Vagina (tissue), 2 donors: ENCODE measurements at regions of chr6 and their contacts with region 1.

Region 1: DNA sequence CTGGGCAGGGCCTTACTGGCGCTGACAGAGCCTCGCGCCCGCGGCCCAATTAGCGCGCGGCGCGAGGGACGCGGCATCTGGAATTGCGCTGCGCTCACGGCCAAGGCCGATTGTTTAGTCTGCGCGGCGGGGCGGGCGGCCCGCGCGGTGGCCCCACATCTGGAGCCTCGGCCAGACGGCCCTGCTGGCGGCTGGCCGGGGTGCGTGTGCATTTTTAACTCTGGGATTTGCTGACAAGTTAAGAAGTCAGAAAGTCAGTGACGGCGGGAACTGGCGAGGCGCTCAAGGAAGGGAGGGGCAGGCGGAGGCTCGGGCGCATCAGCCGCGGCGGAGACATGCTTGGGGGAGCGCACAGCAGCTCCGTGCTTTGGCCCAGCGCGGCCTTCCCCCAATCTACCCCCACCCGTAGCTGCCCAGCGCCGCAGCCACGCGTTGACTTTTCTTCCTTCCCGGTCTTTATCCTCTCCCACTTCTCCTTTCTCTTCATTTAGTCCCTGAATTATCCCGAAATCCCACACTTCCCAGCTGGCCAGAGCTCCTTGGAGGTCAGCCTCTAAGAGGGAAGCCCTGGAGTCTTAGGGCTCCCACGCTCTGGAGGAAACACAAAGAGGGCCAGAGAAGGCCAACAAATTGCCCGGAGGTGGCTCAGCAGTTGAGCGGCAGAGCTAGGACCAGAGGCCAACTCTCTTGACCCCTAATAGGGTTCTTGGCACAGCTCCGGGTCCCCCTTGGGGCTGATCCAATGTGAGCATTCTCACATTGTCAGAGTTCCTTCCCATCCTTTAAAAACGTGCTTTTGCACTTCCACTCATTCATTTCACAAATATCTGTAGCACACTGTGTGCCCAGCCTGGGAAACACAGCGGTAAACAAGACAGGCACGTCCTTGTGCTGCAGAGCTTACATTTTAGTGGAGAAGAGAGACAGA is 40.8 kb upstream of the FOXP4 start:
- DNase-seq: no peak
- H3K4me3 ChIP-seq: peak overlapping the region; percentile 36 to 45
- H3K27ac ChIP-seq: peak overlapping the region; percentile 62
- H3K4me1 ChIP-seq: peaks cover 30% of the 10 kb centered on the region
- H3K27me3 ChIP-seq: no peaks in the 10 kb centered on the region
- CTCF ChIP-seq: no peak
- POLR2A ChIP-seq: no peak

Region 2: DNA sequence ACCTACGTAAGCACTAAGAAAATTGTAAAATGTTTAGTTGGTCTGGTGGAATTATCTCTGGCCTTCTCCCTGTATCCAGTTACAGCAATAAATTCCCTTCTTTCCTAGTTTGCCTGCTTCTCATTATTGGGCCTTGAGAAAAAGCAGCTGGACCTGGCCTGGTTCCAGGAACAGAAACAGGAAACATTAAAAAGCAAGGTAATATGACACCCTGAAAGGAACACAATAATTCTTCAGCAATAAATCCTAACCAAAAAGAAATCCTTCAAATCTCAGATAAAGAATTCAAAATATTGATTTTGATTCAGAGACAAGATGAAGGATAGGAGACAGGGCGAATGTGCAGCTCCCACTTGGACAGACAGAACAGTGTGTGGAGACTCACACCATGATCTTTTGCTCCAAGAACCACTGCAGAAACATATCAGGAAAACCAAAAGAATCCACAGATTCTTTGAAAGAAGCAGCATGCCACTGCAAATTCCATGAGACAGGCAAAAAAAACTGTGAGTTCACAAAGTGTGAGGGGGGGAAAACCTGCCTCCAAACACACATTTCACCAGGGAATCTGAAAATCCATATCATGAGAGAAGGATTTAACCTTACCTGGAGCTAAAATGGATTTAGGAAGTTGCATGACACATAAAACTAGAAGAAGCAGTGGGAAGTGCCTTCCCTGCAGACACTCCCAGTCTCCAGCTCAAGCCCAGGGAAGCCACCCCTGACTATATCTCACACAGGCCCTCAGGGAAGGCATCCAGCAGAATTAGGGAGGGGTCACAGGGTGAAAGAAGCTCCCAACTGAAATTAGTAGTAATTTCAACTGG is 247.8 kb before region 1 on chr6:
- intact Hi-C with region 1: no loop called
- DNase-seq: no peak
- H3K4me3 ChIP-seq: no peak overlapping the region
- H3K27ac ChIP-seq: no peak overlapping the region
- H3K4me1 ChIP-seq: no peaks in the 10 kb centered on the region
- H3K27me3 ChIP-seq: no peaks in the 10 kb centered on the region
- CTCF ChIP-seq: no peak
- POLR2A ChIP-seq: no peak

Region 3: DNA sequence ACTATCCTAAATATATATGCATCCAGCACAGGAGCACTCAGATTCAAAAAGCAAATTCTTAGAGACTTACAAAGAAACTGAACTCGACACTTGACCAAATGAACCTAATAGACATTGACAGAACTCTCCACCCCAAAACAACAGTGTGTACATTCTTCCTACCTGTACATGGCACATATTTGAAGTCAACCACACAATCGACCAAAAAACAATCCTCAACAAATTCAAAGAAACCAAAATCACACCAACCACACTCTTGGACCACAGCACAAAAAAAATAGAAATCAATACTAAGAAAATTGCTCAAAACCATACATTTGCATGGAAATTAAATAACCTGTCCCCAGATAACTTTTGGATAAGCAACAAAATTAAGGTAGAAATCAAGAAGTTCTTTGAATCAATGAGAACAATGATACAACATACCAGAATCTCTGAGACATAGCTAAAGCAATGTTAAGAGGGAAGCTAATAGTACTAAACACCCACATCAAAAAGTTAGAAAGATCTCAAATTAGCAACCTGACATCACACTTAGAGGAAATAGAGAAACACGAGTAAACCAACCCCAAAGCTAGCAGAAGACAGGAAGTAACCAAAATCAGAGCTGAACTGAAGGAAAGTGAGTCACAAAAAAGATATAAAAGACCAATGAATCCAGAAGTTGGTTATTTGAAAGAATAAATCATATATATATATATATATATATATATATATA is 206.4 kb before region 1 on chr6:
- intact Hi-C with region 1: no loop called
- DNase-seq: no peak
- H3K4me3 ChIP-seq: no peak overlapping the region
- H3K27ac ChIP-seq: no peak overlapping the region
- H3K4me1 ChIP-seq: no peaks in the 10 kb centered on the region
- H3K27me3 ChIP-seq: no peaks in the 10 kb centered on the region
- CTCF ChIP-seq: no peak
- POLR2A ChIP-seq: no peak

Region 4: DNA sequence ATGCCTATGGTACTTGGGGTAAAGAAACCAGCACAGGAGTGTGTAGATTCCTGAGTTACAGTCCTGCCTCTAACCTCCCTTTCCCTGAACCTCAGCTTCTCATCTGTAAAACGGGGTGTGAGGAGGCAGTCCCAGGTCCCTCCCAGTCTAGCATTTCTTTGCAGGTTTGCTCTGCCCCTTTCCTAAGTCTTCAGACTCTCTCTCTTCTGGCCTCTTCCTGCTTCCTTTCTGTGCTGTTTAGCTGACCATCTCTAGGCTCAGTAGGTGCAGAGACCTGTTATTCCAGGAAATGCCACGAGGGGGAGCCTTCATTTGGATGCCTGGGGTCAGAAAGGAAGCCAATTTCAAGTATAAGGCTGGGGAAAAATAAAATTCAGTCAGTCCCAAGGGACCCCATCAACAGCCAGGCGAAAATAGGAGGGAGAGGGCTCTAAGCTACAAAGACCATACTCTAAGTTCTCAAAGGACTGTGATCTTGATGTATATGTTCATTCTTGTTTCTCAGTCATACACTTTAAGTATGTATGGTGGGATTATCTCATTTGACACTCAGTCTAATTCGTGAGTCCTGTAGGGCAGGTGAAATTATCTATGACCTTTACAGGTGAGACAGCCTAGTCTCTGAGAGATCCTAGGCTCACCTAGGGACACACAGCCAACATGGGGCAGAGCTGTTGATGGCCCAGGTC is 80.9 kb before region 1 on chr6:
- intact Hi-C with region 1: loop called (anchors 10 kb)
- DNase-seq: no peak
- H3K4me3 ChIP-seq: no peak overlapping the region
- H3K27ac ChIP-seq: no peak overlapping the region
- H3K4me1 ChIP-seq: peaks cover 26% of the 10 kb centered on the region
- H3K27me3 ChIP-seq: no peaks in the 10 kb centered on the region
- CTCF ChIP-seq: peak; percentile 54 to 79 (median 77)
- POLR2A ChIP-seq: no peak

Region 5: GRCh38 chr6:41449399-41450245 is 55.8 kb before region 1 on chr6:
- intact Hi-C with region 1: loop called (anchors 5 kb)
- DNase-seq: no peak
- H3K4me3 ChIP-seq: no peak overlapping the region
- H3K27ac ChIP-seq: no peak overlapping the region
- H3K4me1 ChIP-seq: peaks cover 23% of the 10 kb centered on the region
- H3K27me3 ChIP-seq: no peaks in the 10 kb centered on the region
- CTCF ChIP-seq: no peak
- POLR2A ChIP-seq: no peak

Region 6: DNA sequence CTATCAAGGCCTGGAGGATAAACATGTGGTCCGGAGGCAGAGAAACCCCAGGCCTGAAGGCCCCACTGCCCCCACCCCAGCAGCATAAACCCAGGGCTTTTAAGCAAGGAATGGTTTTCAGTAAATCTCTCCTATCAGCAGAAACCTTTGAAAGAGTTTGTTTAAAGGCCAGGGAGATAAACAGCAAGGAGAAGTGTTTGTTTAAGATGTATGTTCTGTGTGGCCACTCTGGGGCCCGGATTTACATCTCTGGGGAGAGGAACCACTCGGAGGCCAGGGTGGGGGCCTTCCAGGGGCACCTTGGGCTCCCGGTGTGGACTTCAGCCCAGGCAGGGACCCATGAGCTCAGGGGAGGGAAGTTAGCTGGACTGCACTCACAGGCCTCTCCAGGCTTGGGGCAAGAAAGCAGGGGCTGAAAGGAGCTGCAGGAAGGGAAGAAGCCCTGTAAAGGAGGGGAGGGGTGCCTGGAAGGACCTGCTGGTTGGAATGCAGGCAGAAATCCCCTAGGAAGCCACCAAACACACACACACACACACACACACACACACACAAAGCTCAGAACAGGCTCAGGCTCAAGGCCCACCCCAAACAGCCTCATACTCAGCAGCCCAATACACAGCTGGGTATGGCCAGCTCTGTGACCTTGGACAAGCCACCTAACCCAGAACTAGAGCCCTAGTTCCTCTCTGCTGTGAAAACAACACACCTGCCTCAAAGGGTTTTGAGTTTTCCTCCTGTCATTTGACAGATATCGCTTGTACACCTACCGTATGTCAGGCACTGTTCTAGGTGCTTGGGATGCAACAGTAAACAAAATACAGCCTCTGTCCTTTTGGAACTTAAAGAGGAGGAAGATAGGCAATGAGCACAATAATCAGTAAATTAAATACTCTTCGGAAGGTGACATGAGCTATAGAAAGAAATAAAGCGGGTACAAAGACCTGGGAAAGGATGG is 14.6 kb after region 1 on chr6:
- intact Hi-C with region 1: no loop called
- DNase-seq: no peak
- H3K4me3 ChIP-seq: no peak overlapping the region
- H3K27ac ChIP-seq: no peak overlapping the region
- H3K4me1 ChIP-seq: no peaks in the 10 kb centered on the region
- H3K27me3 ChIP-seq: no peaks in the 10 kb centered on the region
- CTCF ChIP-seq: no peak
- POLR2A ChIP-seq: no peak

Region 7: GRCh38 chr6:41545703-41546474 is 40.5 kb after region 1 on chr6 and contains the start of gene FOXP4:
- intact Hi-C with region 1: loop called (anchors 1 kb)
- DNase-seq: peak in 1 of 2 donors; percentile 94
- H3K4me3 ChIP-seq: peak within 1 kb of the TSS; percentile 62 to 98
- H3K27ac ChIP-seq: peak within 1 kb of the TSS; percentile 69
- H3K4me1 ChIP-seq: peaks cover 28% of the 10 kb centered on the region
- H3K27me3 ChIP-seq: no peaks in the 10 kb centered on the region
- CTCF ChIP-seq: no peak
- POLR2A ChIP-seq: no peak
- total RNA-seq, gene FOXP4: 7.4 TPM